Testis (tissue), 5 donors: ENCODE measurements at regions of chr1 and their contacts with region 1.

Region 1: DNA sequence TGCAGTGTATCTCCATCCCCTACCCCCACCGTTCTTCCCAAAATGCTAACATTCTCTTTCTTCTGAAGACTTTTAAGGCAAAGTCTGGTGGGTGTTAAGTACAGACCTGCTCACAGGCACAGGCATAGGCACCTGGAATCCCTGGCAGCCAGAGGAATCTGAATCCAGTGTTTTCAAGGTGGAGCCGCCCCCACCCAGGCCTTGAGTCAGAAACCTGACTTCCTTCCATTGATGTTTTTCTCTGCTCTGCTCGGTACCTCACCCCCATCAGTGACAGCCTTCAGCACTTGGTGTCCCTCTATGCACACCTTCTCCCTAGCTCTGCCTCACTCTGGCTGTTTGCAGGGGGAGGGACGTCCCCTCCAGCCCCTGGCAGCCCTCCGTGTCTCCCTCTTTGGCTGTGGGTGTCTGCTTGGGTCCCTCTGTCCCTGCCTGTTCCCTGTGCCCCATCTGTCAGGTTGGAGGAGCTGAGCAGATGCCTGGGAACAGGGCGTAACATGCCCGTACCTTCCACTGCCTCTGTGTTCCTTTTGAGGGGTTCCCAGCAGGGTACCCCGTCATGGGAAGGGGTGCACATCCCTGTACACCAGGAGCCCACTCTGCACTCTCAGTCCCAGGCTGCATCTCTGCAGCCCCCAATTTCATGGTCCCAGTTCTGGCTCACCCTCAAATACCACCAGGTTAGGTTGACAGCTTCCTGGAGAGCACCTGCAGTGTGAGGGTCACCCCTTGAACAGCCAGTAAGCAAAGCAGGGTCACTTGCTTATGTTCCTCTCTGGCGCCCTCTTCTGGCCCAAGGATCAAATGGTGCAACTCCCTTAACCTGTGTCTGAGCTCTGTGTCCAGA is 6.7 kb downstream of the NCDN start:
- DNase-seq: peak; percentile 90
- H3K4me3 ChIP-seq: no peak overlapping the region
- H3K27ac ChIP-seq: no peak overlapping the region
- H3K4me1 ChIP-seq: peaks cover 7% of the 10 kb centered on the region
- H3K27me3 ChIP-seq: no peaks in the 10 kb centered on the region
- CTCF ChIP-seq: peak; percentile 55 to 71 (median 61)
- POLR2A ChIP-seq: no peak

Region 2: DNA sequence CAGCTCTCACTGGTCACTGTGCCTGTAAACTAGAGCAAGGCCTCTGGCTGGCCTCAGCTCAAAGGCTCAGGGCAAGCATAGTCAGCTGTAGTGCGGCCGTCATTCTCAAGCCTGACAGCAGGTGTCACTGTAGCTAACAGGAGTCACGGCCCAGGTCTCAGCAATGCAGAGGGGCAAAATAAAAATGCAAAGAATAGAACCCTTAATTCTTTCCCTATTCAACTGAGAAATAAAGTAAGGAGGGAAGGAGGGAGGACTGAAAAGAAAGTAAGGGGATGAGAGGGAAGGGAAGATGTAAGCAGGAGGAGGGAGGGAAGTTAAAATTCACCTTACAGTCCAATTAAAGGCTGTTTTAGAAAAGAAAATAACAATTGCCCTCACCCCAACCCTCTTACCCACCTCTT is 113.1 kb before region 1 on chr1:
- intact Hi-C with region 1: loop called (anchors 5 kb)
- DNase-seq: peak; percentile 90
- H3K4me3 ChIP-seq: no peak overlapping the region
- H3K27ac ChIP-seq: no peak overlapping the region
- H3K4me1 ChIP-seq: peaks cover 18% of the 10 kb centered on the region
- H3K27me3 ChIP-seq: no peaks in the 10 kb centered on the region
- CTCF ChIP-seq: peak; percentile 61 to 78 (median 64)
- POLR2A ChIP-seq: no peak